Heart left ventricle (tissue), 16 donors: ENCODE measurements at regions of chr17 and their contacts with region 1.

Region 1: GRCh38 chr17:45218895-45219661 is 2.6 kb upstream of the FMNL1 start:
- DNase-seq: peak; percentile 69 to 90 (median 85)
- ATAC-seq: peak; percentile 58 to 82 (median 79)
- H3K4me3 ChIP-seq: no peak overlapping the region
- H3K27ac ChIP-seq: peak overlapping the region in 1 of 12 donors; percentile 52
- H3K4me1 ChIP-seq: peaks cover 0 to 33% (median 9%) of the 10 kb centered on the region in 12 donors
- H3K27me3 ChIP-seq: no peaks in the 10 kb centered on the region
- CTCF ChIP-seq: peak; percentile 89 to 96 (median 94)
- POLR2A ChIP-seq: no peak

Region 2: GRCh38 chr17:45161019-45161825 is 57.9 kb before region 1 on chr17:
- intact Hi-C with region 1: no loop called
- DNase-seq: peak; percentile 97 to 99 (median 98)
- ATAC-seq: peak; percentile 96 to 98 (median 97)
- H3K4me3 ChIP-seq: peak overlapping the region; percentile 65 to 98 (median 93)
- H3K27ac ChIP-seq: peak overlapping the region; percentile 96 to 100 (median 100)
- H3K4me1 ChIP-seq: peaks cover 6 to 50% (median 36%) of the 10 kb centered on the region in 12 donors
- H3K27me3 ChIP-seq: no peaks in the 10 kb centered on the region
- CTCF ChIP-seq: peak in 3 of 12 donors; percentile 8 to 21 (median 17)
- POLR2A ChIP-seq: peak in 1 of 2 donors; percentile 81

Region 3: GRCh38 chr17:45235416-45236281 is 16.6 kb after region 1 on chr17:
- intact Hi-C with region 1: loop called in 4 of 10 experiments (anchors 1 to 2 kb)
- DNase-seq: peak in 4 of 5 donors; percentile 72 to 85 (median 78)
- ATAC-seq: peak; percentile 29 to 64 (median 47)
- H3K4me3 ChIP-seq: no peak overlapping the region
- H3K27ac ChIP-seq: peak overlapping the region in 1 of 12 donors; percentile 18
- H3K4me1 ChIP-seq: peaks cover 0 to 32% (median 6%) of the 10 kb centered on the region in 12 donors
- H3K27me3 ChIP-seq: no peaks in the 10 kb centered on the region
- CTCF ChIP-seq: peak; percentile 69 to 83 (median 77)
- POLR2A ChIP-seq: no peak

Region 4: GRCh38 chr17:45261577-45262515 is 42.8 kb after region 1 on chr17 and contains the start of gene SPATA32:
- intact Hi-C with region 1: loop called in 2 of 10 experiments (anchors 5 kb)
- DNase-seq: peak; percentile 60 to 84 (median 70)
- ATAC-seq: peak in 3 of 4 donors; percentile 30 to 43 (median 40)
- H3K4me3 ChIP-seq: peak within 1 kb of the TSS; percentile 27 to 75 (median 64)
- H3K27ac ChIP-seq: peak within 1 kb of the TSS in 10 of 12 donors; percentile 24 to 87 (median 70)
- H3K4me1 ChIP-seq: peaks cover 0 to 41% (median 28%) of the 10 kb centered on the region in 12 donors
- H3K27me3 ChIP-seq: no peaks in the 10 kb centered on the region
- CTCF ChIP-seq: no peak
- POLR2A ChIP-seq: no peak
- total RNA-seq, gene SPATA32: not detected

Region 5: GRCh38 chr17:45270828-45271418 is 51.8 kb after region 1 on chr17:
- intact Hi-C with region 1: loop called in 5 of 10 experiments (anchors 2 to 5 kb)
- DNase-seq: no peak
- ATAC-seq: peak in 3 of 4 donors; percentile 21 to 54 (median 29)
- H3K4me3 ChIP-seq: no peak overlapping the region
- H3K27ac ChIP-seq: no peak overlapping the region
- H3K4me1 ChIP-seq: peaks cover 0 to 6% (median 0%) of the 10 kb centered on the region in 12 donors
- H3K27me3 ChIP-seq: no peaks in the 10 kb centered on the region
- CTCF ChIP-seq: peak; percentile 18 to 60 (median 46)
- POLR2A ChIP-seq: no peak

Region 6: DNA sequence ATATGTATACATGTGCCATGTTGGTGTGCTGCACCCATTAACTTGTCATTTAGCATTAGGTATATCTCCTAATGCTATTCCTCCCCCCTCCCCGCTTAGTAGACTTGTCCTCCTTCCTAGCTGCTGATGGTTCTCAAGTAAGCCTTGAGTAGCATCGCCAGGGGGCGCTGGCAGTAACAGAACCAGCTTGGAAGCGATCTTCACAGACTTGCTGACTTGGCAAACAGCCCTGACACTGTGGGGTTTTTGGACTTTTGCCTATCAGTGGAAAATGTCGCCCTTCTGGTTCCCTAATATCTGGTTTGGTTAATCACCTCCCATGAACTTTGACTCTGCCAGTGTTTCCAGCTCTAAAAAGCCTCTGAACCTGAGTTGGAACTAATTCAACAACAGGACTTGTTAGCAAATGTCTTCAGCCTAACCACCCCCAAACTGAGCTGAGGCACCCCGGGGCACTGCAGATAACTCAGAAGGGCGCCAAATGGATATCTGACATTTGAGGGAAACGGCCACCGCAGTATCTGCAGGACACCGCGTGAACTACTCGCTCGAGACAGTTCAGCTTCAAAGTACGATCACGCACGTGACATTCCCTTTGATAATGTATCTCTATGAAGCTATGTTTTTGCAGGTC is 58.3 kb after region 1 on chr17:
- intact Hi-C with region 1: loop called in 4 of 10 experiments (anchors 5 kb)
- DNase-seq: peak; percentile 90 to 97 (median 93)
- ATAC-seq: peak; percentile 62 to 76 (median 67)
- H3K4me3 ChIP-seq: peak overlapping the region in 1 of 12 donors; percentile 33
- H3K27ac ChIP-seq: peak overlapping the region; percentile 28 to 89 (median 78)
- H3K4me1 ChIP-seq: peaks cover 0 to 43% (median 26%) of the 10 kb centered on the region in 12 donors
- H3K27me3 ChIP-seq: no peaks in the 10 kb centered on the region
- CTCF ChIP-seq: peak; percentile 72 to 87 (median 82)
- POLR2A ChIP-seq: peak in 1 of 2 donors; percentile 25

Region 7: DNA sequence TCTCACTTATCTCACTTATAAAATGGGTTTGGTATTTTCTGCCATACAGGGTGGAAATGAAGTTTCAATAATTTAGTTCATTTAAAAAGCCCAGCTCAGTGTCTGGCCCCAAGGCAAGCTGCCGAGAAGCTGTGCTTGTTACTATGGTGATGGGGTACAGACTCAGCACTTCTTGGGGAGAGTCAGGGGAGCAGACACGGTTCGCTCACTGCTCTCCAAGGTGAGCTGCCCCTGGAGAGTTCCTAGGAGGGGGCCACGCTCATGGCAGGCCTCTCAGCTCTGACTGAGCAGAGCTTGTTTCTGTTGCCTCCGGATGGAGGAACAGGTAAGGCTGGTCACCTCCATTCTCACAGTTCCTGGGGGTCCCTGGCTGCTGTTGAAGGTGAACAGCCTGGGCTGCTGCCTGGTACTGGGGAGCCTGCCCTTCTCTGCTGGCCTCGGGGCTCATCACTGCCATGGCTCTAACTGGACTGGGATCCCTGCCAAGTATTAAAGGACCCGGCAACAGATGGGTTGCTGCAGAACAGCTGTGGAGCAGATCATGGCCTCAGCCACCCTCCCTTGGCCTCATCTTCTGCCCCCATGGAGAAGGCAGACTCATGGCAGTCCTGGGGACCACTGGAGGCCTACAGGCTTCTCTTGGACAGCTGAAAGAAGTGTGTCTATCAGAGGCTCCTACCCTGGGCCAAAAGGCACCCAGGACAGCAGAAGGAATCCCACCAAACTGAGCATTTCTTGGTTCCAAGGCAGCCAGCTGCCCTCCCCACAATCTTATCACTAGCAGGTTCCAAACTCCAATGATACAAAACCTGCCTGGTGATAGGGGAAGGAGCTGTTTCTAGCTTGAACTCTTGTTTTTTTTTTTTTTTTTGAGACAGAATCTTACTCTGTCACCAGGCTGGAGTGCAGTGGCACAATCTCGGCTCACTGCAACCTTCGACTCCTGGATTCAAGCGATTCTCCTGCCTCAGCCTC is 68.7 kb after region 1 on chr17:
- intact Hi-C with region 1: no loop called
- DNase-seq: peak in 1 of 5 donors; percentile 66
- ATAC-seq: peak; percentile 1 to 35 (median 22)
- H3K4me3 ChIP-seq: no peak overlapping the region
- H3K27ac ChIP-seq: peak overlapping the region in 11 of 12 donors; percentile 51 to 91 (median 86)
- H3K4me1 ChIP-seq: peaks cover 5 to 81% (median 70%) of the 10 kb centered on the region in 12 donors
- H3K27me3 ChIP-seq: no peaks in the 10 kb centered on the region
- CTCF ChIP-seq: no peak
- POLR2A ChIP-seq: no peak

Region 8: GRCh38 chr17:45317112-45317928 is 98.2 kb after region 1 on chr17:
- intact Hi-C with region 1: loop called in 1 of 10 experiments (anchors 5 kb)
- DNase-seq: peak; percentile 100
- ATAC-seq: peak; percentile 90 to 96 (median 94)
- H3K4me3 ChIP-seq: peak overlapping the region in 11 of 12 donors; percentile 24 to 93 (median 80)
- H3K27ac ChIP-seq: peak overlapping the region; percentile 73 to 98 (median 94)
- H3K4me1 ChIP-seq: peaks cover 0 to 75% (median 46%) of the 10 kb centered on the region in 12 donors
- H3K27me3 ChIP-seq: no peaks in the 10 kb centered on the region
- CTCF ChIP-seq: peak in 1 of 12 donors; percentile 19
- POLR2A ChIP-seq: no peak

Region 9: DNA sequence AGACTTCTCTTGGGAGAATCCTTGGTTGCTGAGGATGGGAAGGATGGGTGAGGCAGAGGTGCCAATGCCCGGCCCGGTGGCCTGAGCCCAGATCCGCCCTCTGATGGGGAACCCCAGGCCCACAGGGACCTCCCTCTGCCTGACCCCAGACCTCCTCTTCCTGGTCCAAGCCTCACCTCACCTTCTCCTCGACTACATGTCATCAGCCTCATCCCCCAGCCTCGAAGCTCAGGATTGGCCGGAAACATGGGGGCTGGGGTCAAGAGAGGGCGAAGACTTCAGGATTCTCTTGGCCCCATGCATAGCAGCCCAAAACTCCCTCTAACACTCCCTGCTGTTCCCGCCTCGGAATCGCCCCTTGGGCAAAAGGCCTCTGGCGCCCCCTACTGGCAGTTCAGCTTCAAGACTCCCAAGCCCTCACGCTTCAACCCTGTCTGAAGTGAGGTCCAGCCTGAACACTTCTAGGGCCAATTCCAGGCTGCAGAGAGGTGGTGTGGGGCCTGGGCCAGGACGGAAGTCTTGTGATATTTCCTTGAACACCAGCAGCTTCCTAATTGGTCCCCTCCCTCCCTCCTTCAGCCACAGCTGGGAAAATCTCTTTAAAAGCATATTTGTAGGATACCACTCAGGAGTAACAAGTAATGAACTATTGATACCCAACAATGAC is 166.4 kb after region 1 on chr17:
- intact Hi-C with region 1: loop called (anchors 1 to 5 kb)
- DNase-seq: peak; percentile 88 to 94 (median 89)
- ATAC-seq: peak; percentile 86 to 95 (median 90)
- H3K4me3 ChIP-seq: no peak overlapping the region
- H3K27ac ChIP-seq: peak overlapping the region in 1 of 12 donors; percentile 63
- H3K4me1 ChIP-seq: peaks cover 0 to 31% (median 14%) of the 10 kb centered on the region in 12 donors
- H3K27me3 ChIP-seq: peaks cover 0 to 3% (median 0%) of the 10 kb centered on the region in 9 donors
- CTCF ChIP-seq: peak; percentile 91 to 100 (median 98)
- POLR2A ChIP-seq: no peak